ENCODE measurements at regions of chr1 and their contacts with region 1.

Region 1: GRCh38 chr1:169670836-169671235 is 40.6 kb downstream of the SELL start:
- DNase-seq: no peak
- ATAC-seq: no peak
- H3K4me3 ChIP-seq: peak overlapping the region in 1 of 5 experiments; percentile 4
- H3K4me3 Mint-ChIP-seq: no peak overlapping the region
- H3K27ac ChIP-seq: peak overlapping the region in 1 of 2 donors; percentile 80
- H3K27ac Mint-ChIP-seq: peak overlapping the region; percentile 81
- H3K4me1 ChIP-seq: peaks cover 48 to 49% of the 10 kb centered on the region in 2 donors
- H3K4me1 Mint-ChIP-seq: peaks cover 63% of the 10 kb centered on the region
- H3K27me3 ChIP-seq: no peaks in the 10 kb centered on the region
- H3K27me3 Mint-ChIP-seq: no peaks in the 10 kb centered on the region
- CTCF ChIP-seq: no peak

Region 2: GRCh38 chr1:169701261-169702005 is 30.6 kb after region 1 on chr1:
- CTCF ChIA-PET with region 1: interaction called, 8 read pairs
- POLR2A ChIA-PET with region 1: interaction called, 5 read pairs
- intact Hi-C with region 1: loop called (anchors 1 kb)
- DNase-seq: peak; percentile 45
- ATAC-seq: peak; percentile 44
- H3K4me3 ChIP-seq: peak overlapping the region; percentile 0 to 16 (median 1)
- H3K4me3 Mint-ChIP-seq: peak overlapping the region; percentile 76
- H3K27ac ChIP-seq: peak overlapping the region; percentile 56 to 87
- H3K27ac Mint-ChIP-seq: peak overlapping the region; percentile 94
- H3K4me1 ChIP-seq: peaks cover 98 to 100% of the 10 kb centered on the region in 2 donors
- H3K4me1 Mint-ChIP-seq: peaks cover 95% of the 10 kb centered on the region
- H3K27me3 ChIP-seq: no peaks in the 10 kb centered on the region
- H3K27me3 Mint-ChIP-seq: no peaks in the 10 kb centered on the region
- CTCF ChIP-seq: no peak